BJ (cell line): ENCODE measurements at regions of chr3 and their contacts with region 1.

Region 1: DNA sequence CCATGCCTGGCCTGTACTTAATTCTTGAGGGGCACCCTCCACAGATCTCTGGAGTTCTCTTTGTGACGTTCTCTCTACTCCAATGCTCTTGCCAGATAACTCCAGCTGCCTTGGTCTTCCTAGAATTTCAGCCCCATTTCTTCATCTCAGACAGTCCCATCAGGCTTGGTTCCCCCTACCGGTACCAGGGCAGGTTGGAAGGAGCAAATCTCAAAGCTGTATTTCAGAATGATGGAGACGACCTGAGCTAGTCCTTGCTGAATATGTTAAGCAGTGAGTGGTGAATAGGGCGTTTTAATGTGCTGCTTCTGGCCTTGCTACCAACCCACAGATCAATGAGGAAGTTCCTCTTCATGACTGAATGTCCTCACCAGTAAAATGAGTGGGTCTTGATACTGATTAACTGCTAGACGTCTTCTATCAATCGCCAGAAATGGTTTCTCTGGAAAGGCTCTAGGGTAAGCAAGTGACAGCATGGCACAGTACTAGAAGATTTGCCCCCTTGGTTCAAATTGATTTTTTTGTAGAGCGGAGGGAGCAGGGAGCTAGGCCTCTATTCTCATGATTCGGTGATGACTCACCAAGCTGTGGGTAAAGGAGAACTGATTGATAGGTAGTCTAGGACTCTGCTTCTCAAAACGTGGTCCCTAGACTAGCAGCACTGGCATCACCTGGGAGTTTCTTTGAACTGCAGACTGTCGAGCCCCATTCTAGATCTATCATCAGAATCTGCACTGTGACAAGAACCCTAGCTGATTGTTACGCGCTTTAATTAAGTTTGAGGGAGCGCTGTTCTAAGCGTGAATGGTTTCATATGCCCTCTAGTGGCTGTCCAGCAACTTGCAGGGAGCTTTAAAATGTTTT is 67.8 kb downstream of the UBP1 start:
- DNase-seq: no peak
- H3K4me3 ChIP-seq: no peak overlapping the region
- H3K27me3 ChIP-seq: no peaks in the 10 kb centered on the region
- CTCF ChIP-seq: peak; percentile 85

Region 2: DNA sequence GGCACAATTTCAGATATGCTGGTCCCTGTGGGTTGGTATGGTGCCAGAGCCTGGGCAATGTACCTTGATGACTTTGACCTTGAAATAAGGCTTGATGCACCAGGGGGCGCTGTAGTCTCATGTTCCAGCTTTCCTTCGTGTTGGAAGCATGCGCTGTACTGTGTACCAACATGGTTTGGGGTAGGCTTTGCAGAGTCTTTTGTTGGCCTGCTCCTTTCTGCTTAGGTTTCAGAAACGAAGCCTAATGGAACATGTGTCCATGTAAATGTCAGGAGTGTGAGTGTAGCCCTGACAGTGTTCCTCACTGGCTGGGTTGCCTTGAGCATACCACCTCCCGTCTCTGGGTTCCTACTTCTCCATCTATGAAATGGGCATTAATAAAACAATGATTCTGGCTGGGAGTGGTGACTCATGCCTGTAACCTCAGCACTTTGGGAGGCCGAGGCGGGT is 424.6 kb before region 1 on chr3:
- CTCF ChIA-PET with region 1: interaction called, 16 read pairs
- POLR2A ChIA-PET with region 1: no interaction called
- DNase-seq: no peak
- H3K4me3 ChIP-seq: no peak overlapping the region
- H3K27me3 ChIP-seq: no peaks in the 10 kb centered on the region; the same call in 1 of the 2 replicates
- CTCF ChIP-seq: peak; percentile 83

Region 3: GRCh38 chr3:33131331-33132018 is 241.0 kb before region 1 on chr3:
- CTCF ChIA-PET with region 1: interaction called, 184 read pairs
- POLR2A ChIA-PET with region 1: interaction called, 3 read pairs
- DNase-seq: no peak
- H3K4me3 ChIP-seq: no peak overlapping the region
- H3K27me3 ChIP-seq: no peaks in the 10 kb centered on the region
- CTCF ChIP-seq: peak; percentile 62

Region 4: GRCh38 chr3:33299395-33300081 is 72.9 kb before region 1 on chr3:
- CTCF ChIA-PET with region 1: interaction called, 12 read pairs
- POLR2A ChIA-PET with region 1: no interaction called
- DNase-seq: peak; percentile 61
- H3K4me3 ChIP-seq: no peak overlapping the region
- H3K27me3 ChIP-seq: no peaks in the 10 kb centered on the region
- CTCF ChIP-seq: no peak

Region 5: GRCh38 chr3:33385423-33385822 is 13.0 kb after region 1 on chr3:
- CTCF ChIA-PET with region 1: interaction called, 51 read pairs
- POLR2A ChIA-PET with region 1: no interaction called
- DNase-seq: no peak
- H3K4me3 ChIP-seq: no peak overlapping the region
- H3K27me3 ChIP-seq: no peaks in the 10 kb centered on the region
- CTCF ChIP-seq: no peak